Endothelial cell of umbilical vein (primary cell): ENCODE measurements at regions of chr4 and their contacts with region 1.

Region 1: GRCh38 chr4:10116580-10117358 is at the start of gene WDR1:
- DNase-seq: peak; percentile 95
- H3K4me3 ChIP-seq: peak within 1 kb of the TSS; percentile 13 to 91 (median 60)
- H3K27ac ChIP-seq: peak within 1 kb of the TSS; percentile 84
- H3K4me1 ChIP-seq: peaks cover 34% of the 10 kb centered on the region
- H3K27me3 ChIP-seq: no peaks in the 10 kb centered on the region
- CTCF ChIP-seq: no peak
- POLR2A ChIP-seq: peak; percentile 99
- total RNA-seq, gene WDR1: 547 and 590 TPM in 2 replicates

Region 2: GRCh38 chr4:10033191-10033881 is 83.4 kb before region 1 on chr4:
- CTCF ChIA-PET with region 1: no interaction called
- POLR2A ChIA-PET with region 1: no interaction called
- dilution Hi-C with region 1: no loop called
- intact Hi-C with region 1: no loop called
- DNase-seq: peak; percentile 28
- H3K4me3 ChIP-seq: no peak overlapping the region
- H3K27ac ChIP-seq: no peak overlapping the region
- H3K4me1 ChIP-seq: peaks cover 2% of the 10 kb centered on the region
- H3K27me3 ChIP-seq: no peaks in the 10 kb centered on the region
- CTCF ChIP-seq: no peak
- POLR2A ChIP-seq: no peak

Region 3: DNA sequence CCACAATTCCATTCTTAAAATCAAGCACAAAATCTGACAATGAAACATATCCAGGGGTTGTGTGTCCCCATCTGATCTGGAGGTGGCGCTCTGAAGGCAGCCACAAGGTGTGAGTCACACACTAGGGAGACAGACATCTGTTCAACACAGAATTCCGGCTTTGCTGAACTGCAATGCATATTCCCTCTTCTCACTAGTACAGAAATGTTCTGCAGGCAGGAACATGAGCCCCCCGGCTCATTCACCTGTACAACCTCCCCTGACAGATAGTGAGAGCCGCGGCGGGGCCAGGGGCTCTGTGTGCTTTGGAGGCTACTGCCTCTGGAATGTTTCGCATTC is 42.0 kb before region 1 on chr4:
- CTCF ChIA-PET with region 1: interaction called, 3 read pairs
- POLR2A ChIA-PET with region 1: interaction called, 17 read pairs
- dilution Hi-C with region 1: no loop called
- intact Hi-C with region 1: loop called (anchors 5 kb)
- DNase-seq: peak; percentile 53
- H3K4me3 ChIP-seq: no peak overlapping the region
- H3K27ac ChIP-seq: no peak overlapping the region
- H3K4me1 ChIP-seq: peaks cover 23% of the 10 kb centered on the region
- H3K27me3 ChIP-seq: no peaks in the 10 kb centered on the region
- CTCF ChIP-seq: peak; percentile 53 to 61
- POLR2A ChIP-seq: peak; percentile 20

Region 4: GRCh38 chr4:10096201-10096977 is 20.4 kb before region 1 on chr4:
- CTCF ChIA-PET with region 1: interaction called, 9 read pairs
- POLR2A ChIA-PET with region 1: interaction called, 49 read pairs
- dilution Hi-C with region 1: no loop called
- intact Hi-C with region 1: loop called (anchors 1 kb)
- DNase-seq: peak; percentile 71
- H3K4me3 ChIP-seq: no peak overlapping the region
- H3K27ac ChIP-seq: peak overlapping the region; percentile 79
- H3K4me1 ChIP-seq: peaks cover 82% of the 10 kb centered on the region
- H3K27me3 ChIP-seq: no peaks in the 10 kb centered on the region
- CTCF ChIP-seq: no peak
- POLR2A ChIP-seq: peak; percentile 45

Region 5: DNA sequence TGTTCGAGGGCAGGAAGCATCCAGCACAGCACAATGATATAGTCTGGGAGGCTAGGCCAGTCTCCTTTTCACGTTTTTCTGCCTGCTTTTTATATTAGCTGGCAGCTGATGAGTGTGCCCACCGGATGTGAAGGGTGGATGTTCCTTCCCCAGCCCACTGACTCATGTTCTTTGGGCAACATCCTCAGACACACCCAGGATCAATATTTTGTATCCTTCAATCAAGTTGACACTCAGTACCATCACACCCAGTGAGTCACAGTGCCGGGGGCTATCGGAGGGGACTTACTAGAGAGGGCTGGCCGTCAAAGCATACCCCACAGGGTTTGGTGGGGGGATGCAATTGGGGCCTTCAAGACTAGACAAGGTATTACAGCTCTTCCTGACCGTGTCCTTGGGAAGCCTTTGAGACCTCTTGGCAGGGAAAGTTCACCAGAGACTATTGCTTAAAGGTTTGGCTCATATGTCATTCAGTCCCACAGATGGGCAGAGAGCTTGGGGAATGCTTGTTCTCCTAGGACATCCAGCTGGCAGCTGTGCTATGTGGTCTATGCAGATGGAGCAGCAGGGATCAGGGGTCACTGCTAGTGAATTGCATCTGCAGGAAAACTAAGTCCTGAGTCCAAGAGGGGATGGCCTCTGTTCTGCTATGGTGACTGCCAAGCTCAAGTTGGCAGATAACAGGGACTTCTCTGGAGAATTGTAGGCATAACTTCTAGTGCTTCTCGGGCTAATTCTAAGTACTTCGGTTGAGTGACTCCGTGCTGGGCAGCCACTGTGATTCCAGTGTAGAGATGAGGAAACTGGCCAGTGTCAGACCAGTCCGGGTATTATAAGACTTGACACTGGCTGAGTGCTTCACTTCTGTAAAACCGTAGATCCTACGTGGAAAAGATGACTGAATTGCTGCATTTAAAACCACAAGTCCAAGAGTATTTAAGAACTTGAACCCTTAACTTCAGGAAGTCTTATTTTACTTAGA is 12.7 kb after region 1 on chr4:
- CTCF ChIA-PET with region 1: interaction called, 3 read pairs
- POLR2A ChIA-PET with region 1: interaction called, 28 read pairs
- dilution Hi-C with region 1: no loop called
- intact Hi-C with region 1: no loop called
- DNase-seq: no peak
- H3K4me3 ChIP-seq: no peak overlapping the region
- H3K27ac ChIP-seq: no peak overlapping the region
- H3K4me1 ChIP-seq: peaks cover 2% of the 10 kb centered on the region
- H3K27me3 ChIP-seq: peaks cover 0 to 1% of the 10 kb centered on the region in 2 experiments
- CTCF ChIP-seq: no peak
- POLR2A ChIP-seq: no peak

Region 6: GRCh38 chr4:10173037-10173753 is 56.4 kb after region 1 on chr4:
- CTCF ChIA-PET with region 1: interaction called, 10 read pairs
- POLR2A ChIA-PET with region 1: interaction called, 11 read pairs
- dilution Hi-C with region 1: no loop called
- intact Hi-C with region 1: no loop called
- DNase-seq: peak; percentile 70
- H3K4me3 ChIP-seq: no peak overlapping the region
- H3K27ac ChIP-seq: peak overlapping the region; percentile 6
- H3K4me1 ChIP-seq: peaks cover 15% of the 10 kb centered on the region
- H3K27me3 ChIP-seq: no peaks in the 10 kb centered on the region
- CTCF ChIP-seq: peak in 1 of 2 donors; percentile 28
- POLR2A ChIP-seq: no peak

Region 7: DNA sequence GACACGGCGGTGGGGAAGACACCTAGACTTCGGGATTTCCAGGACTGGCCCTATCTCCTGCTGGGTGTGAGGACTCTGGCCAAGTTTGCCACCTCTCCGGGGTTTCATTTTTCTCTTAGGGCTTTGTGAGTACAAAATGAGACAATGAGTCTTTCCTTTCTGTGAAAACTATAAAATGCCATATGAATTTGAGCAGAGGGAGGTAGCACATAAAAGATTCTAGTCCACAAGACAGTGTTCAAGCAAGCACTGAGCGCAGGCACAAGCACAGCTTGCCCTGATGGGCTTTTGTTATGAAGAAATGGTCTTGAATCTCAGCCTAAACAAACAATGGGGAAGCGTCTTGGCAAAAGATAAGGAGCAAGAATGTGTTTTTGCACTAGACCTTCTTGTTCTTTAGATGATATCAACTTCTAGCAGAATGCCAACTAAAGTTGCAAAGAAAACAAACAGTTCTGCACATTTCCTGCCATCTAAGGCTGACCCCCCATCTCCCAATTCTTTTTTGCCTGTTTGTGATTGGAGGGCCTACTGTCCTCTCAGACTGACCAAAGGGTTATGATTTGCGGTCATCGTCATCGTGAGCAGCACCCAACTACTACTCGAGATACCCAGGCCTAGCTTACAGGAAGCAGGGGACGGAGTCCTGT is 413.5 kb after region 1 on chr4:
- CTCF ChIA-PET with region 1: interaction called, 3 read pairs
- POLR2A ChIA-PET with region 1: interaction called, 5 read pairs
- dilution Hi-C with region 1: no loop called
- intact Hi-C with region 1: loop called (anchors 1 kb)
- DNase-seq: peak; percentile 95
- H3K4me3 ChIP-seq: peak overlapping the region in 1 of 3 experiments; percentile 35
- H3K27ac ChIP-seq: peak overlapping the region; percentile 98
- H3K4me1 ChIP-seq: peaks cover 37% of the 10 kb centered on the region
- H3K27me3 ChIP-seq: no peaks in the 10 kb centered on the region
- CTCF ChIP-seq: no peak
- POLR2A ChIP-seq: peak; percentile 84